Breast epithelium (tissue), 4 donors: ENCODE measurements at regions of chr1 and their contacts with region 1.

Region 1: GRCh38 chr1:207963427-207964194 is 52.7 kb upstream of the CD34 start:
- DNase-seq: peak; percentile 86 to 94
- H3K4me3 ChIP-seq: peak overlapping the region; percentile 52 to 77 (median 64)
- H3K27ac ChIP-seq: peak overlapping the region; percentile 91 to 98
- H3K4me1 ChIP-seq: peaks cover 0 to 11% of the 10 kb centered on the region in 2 donors
- H3K27me3 ChIP-seq: no peaks in the 10 kb centered on the region
- CTCF ChIP-seq: peak; percentile 94 to 100 (median 100)
- POLR2A ChIP-seq: peak; percentile 76

Region 2: DNA sequence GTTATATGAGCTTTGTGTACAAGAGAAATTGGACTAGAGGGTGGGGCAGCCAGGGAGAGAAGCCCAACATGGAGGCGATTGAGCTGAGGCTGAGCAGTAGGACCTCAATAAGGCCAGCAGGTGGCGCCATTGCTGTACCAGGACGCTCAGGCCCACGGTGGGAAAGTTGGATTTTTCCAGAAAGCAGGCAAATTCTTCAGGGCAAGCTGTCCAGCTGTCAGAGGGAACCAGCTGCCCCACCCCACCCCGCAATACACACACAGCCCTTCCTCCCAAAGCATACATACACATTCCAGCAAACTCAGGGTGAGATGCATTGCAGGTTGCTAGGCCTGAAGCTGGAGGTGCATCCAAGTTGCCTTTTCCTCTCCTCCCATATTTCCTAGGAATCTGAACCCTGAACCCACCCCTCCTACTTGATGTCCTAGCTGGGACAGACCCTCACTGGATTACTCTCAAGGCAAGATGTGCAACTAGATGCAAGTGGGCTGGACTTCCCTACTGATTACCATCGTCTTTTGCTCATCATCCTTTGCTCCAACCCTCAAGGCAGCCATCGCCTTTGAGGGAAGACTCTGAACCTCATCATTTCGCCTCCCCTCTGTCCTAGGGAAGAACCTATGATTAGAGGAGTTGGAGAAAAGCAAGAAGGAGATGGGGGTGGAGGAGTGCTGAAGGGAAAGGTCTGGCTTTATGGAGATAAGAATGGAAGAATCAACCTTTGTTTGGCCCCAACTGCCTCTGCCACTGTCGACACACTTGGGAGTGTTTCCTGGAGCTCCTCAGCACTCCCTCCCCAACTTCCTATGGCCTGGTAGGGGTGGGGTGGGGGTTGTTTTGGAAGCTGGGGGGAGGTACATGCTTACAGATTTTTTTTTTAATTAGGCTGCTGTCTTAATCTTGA is 78.2 kb before region 1 on chr1:
- intact Hi-C with region 1: loop called (anchors 5 kb)
- DNase-seq: peak; percentile 64 to 83
- H3K4me3 ChIP-seq: no peak overlapping the region
- H3K27ac ChIP-seq: peak overlapping the region; percentile 9 to 60
- H3K4me1 ChIP-seq: peaks cover 0 to 17% of the 10 kb centered on the region in 2 donors
- H3K27me3 ChIP-seq: no peaks in the 10 kb centered on the region
- CTCF ChIP-seq: peak; percentile 86 to 97 (median 95)
- POLR2A ChIP-seq: no peak

Region 3: GRCh38 chr1:208238710-208239472 is 275.3 kb after region 1 on chr1:
- intact Hi-C with region 1: no loop called
- DNase-seq: no peak
- H3K4me3 ChIP-seq: no peak overlapping the region
- H3K27ac ChIP-seq: no peak overlapping the region
- H3K4me1 ChIP-seq: peaks cover 0 to 4% of the 10 kb centered on the region in 2 donors
- H3K27me3 ChIP-seq: no peaks in the 10 kb centered on the region
- CTCF ChIP-seq: peak in 2 of 3 donors; percentile 38 to 42
- POLR2A ChIP-seq: no peak